AG04449 (cell line): ENCODE measurements at regions of chr5 and their contacts with region 1.

Region 1: GRCh38 chr5:151075698-151076331 is 5.0 kb downstream of the TNIP1 start:
- DNase-seq: no peak
- H3K4me3 ChIP-seq: no peak overlapping the region
- CTCF ChIP-seq: no peak

Region 2: GRCh38 chr5:150918613-150919012 is 157.2 kb before region 1 on chr5:
- CTCF ChIA-PET with region 1: no interaction called
- POLR2A ChIA-PET with region 1: no interaction called
- DNase-seq: peak; percentile 10
- H3K4me3 ChIP-seq: no peak overlapping the region
- CTCF ChIP-seq: no peak

Region 3: DNA sequence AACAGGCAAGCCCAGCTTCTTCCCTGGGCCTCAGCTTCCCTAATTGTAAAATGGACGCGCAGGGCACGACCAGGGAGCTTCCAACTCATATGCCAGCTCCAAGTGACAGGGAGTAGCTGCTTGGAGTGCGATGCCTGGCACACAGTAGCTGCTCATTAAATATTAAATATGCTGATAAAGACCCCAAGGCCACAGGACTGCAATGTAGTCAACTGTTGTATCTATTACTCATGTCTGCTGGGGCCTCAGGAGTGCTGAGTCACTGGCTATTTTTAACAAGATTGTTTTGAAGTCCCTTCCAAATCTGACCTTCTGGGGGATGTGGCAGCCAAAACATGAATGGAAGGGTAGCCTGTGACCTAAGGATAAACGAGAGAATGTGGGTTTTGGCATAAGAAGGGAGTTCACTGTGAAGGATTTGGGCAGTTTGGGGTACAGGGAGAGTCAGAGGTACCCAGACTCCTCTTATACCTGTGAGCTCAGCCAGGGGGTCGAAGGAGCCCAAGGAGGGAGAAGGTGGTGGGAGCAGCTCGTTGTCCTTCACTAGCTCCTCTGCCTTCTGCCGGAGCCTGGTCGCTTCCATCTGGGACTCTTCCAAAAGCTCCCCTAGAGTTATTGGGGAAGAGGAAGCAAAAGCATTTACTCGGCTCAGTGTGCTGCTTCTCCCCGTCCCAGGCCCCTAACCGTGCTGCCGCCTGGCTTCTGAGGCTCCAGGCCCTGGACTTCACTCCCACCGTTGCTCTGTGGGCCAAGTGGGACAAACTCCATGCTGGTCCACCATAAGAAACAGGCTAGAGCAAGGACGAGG is 12.5 kb before region 1 on chr5:
- CTCF ChIA-PET with region 1: interaction called, 12 read pairs
- POLR2A ChIA-PET with region 1: interaction called, 3 read pairs
- DNase-seq: no peak
- H3K4me3 ChIP-seq: no peak overlapping the region
- CTCF ChIP-seq: no peak